ENCODE measurements at regions of chr22 and their contacts with region 1.

Region 1: DNA sequence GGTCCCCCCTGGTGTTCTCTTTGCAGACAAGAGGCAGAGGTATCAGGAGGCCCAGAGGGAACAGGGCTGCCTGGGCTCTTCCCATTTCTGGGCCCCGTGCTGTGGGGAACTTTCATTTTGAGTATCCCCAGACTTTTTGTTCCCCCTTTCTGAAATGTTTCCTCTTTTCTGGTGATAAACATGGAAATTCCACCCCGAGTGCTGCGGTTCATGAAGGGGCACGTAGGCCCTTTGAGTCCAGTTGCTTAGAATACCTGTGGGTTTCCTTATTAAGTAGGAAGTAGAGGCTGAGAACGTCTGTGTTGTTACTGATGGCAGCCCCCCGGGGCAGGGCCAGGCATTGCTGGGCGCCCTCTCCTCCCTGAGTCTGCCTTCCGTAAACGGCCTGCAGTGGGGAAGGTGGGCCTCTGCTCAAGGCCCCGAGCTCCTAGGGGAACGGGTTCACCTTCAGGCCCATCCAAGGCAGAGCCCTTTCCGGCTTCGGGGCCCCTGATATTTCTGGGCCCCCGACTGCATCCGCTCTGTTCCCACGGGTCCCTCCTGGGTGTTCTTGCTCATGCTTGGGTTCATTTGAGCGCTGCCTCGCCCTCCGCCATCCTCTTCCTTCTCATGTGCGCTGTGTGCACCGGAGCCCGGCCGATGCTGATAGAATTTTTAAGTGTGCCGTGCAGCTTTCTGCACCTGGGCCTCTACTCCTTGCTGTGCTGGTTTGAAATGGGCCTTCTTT is 12.0 kb downstream of the TBC1D22A start:
- DNase-seq: peak in 2 of 9 experiments; percentile 21 to 48
- ATAC-seq: peak; percentile 39
- H3K4me3 ChIP-seq: no peak overlapping the region
- H3K4me3 Mint-ChIP-seq: peak overlapping the region; percentile 73
- H3K27ac ChIP-seq: peak overlapping the region; percentile 35 to 59
- H3K27ac Mint-ChIP-seq: peak overlapping the region; percentile 95
- H3K4me1 ChIP-seq: peaks cover 71% of the 10 kb centered on the region
- H3K4me1 Mint-ChIP-seq: peaks cover 76% of the 10 kb centered on the region
- H3K27me3 ChIP-seq: no peaks in the 10 kb centered on the region
- H3K27me3 Mint-ChIP-seq: no peaks in the 10 kb centered on the region
- CTCF ChIP-seq: no peak

Region 2: DNA sequence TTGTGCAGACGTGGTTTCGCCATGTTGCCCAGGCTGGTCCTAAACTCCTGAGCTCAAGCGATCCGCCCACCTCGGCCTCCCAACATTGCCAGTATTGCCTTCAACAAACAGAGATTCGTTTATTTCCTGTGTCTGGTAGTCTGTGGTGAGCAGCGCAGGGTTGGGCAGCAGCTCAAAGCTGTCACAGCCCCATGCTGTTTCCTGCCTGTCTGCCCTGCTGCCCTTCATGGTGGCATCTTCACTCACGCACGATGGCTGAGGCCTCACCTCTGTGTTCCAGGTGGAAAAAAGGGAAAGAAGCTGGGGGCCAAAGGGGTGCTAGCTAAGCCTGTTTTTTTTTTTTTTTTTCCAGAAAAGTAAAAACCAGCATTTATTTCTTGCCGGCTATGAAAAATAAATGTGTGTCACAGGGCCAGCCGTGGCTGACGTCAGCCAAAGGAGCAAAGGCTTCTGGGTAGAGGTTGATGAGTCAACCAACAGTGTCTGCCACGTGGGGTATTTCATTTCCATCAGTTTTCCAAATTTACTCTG is 16.9 kb after region 1 on chr22:
- CTCF ChIA-PET with region 1: no interaction called
- POLR2A ChIA-PET with region 1: interaction called, 8 read pairs
- intact Hi-C with region 1: loop called in 1 of 2 experiments (anchors 2 kb)
- DNase-seq: peak; percentile 69 to 96 (median 85)
- ATAC-seq: peak; percentile 90
- H3K4me3 ChIP-seq: peak overlapping the region; percentile 29 to 47
- H3K4me3 Mint-ChIP-seq: peak overlapping the region; percentile 76
- H3K27ac ChIP-seq: peak overlapping the region; percentile 95 to 99
- H3K27ac Mint-ChIP-seq: peak overlapping the region; percentile 100
- H3K4me1 ChIP-seq: peaks cover 36% of the 10 kb centered on the region
- H3K4me1 Mint-ChIP-seq: peaks cover 50% of the 10 kb centered on the region
- H3K27me3 ChIP-seq: no peaks in the 10 kb centered on the region
- H3K27me3 Mint-ChIP-seq: no peaks in the 10 kb centered on the region
- CTCF ChIP-seq: no peak

Region 3: DNA sequence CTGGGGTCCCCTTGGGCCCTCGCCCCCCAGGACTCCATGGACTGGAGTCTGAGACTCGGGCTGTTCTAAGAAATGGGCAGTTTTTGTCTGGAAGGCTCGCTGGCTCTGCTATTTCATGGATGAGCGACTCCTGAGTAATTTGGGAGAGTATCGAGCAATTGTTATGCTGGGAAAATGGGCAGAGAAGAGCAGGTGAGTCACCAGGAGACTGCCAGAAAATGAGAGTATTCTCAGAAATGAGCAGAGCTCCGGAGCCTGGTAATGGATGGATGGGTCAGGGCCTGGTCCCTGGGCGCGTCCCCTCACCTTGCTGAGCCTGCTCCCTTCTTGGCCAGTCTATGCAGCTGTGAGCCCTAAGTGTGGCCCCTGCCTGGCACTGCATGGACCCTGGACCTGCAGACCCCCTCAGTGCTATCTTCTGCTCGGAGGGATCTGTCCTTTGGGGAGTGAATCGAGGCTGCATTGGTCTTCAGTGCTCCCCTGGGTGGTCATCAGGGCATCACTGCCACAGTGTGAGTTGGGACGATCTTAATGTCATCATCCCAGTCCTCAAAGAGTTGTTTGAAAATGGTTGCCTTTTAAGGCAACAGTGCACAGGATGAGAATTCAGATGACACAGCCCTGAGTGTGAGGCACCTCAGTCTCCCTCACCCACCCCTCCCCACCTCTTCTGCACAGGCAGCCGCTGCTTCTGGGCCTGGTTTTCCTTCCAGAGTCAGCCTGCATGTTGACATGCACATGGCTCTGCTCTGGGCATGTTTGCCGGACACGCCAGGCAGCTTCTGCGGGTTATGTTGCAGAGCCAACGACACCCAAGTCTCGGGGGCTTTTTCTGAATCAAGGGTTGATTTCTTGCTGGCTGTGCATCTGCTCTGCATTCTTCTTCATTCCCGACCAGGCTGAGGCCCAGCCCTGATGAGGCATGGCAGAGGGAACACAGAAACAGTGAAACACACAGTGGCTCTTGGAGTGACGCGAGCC is 507.0 kb after region 1 on chr22:
- CTCF ChIA-PET with region 1: no interaction called
- POLR2A ChIA-PET with region 1: no interaction called
- intact Hi-C with region 1: no loop called
- DNase-seq: no peak
- ATAC-seq: no peak
- H3K4me3 ChIP-seq: no peak overlapping the region
- H3K4me3 Mint-ChIP-seq: no peak overlapping the region
- H3K27ac ChIP-seq: no peak overlapping the region
- H3K27ac Mint-ChIP-seq: no peak overlapping the region
- H3K4me1 ChIP-seq: no peaks in the 10 kb centered on the region
- H3K4me1 Mint-ChIP-seq: no peaks in the 10 kb centered on the region
- H3K27me3 ChIP-seq: no peaks in the 10 kb centered on the region
- H3K27me3 Mint-ChIP-seq: peaks cover 17% of the 10 kb centered on the region
- CTCF ChIP-seq: no peak

Measured in CD8-positive, alpha-beta T cell (primary cell).